CD4-positive, alpha-beta T cell (primary cell): ENCODE measurements at regions of chrX and their contacts with region 1.

Region 1: DNA sequence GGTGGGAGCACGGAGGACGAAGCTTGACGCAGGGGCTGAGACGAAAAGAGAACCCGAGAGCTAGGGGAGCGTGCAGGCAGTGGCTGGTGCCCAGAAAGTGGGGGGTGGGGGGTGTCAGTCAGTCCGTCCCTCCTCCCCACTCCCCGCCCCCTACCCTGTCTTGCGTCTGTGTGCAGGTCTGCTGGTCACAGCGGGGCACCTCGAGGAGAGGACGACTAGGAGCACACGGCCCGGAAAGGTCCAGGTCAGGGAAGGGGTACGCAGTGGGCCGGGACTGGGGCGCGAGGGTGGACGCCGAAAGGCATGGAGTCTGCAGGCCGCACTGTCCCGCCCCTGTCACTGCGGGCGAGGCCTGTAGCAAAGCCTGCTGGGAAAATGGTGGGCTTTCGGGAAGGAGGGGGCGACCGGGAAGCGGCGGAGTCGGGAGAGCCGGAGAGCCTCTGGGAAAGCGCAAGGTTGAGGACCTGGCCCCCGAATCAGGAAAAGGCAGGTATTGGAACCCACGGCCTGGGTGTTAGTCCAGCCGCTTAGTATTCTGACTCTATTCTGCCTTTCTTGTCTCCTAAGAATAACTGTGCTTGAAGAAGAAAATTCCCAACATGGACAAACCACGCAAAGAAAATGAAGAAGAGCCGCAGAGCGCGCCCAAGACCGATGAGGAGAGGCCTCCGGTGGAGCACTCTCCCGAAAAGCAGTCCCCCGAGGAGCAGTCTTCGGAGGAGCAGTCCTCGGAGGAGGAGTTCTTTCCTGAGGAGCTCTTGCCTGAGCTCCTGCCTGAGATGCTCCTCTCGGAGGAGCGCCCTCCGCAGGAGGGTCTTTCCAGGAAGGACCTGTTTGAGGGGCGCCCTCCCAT is 769 bp downstream of the TCEAL1 start:
- DNase-seq: peak in 5 of 14 experiments; percentile 9 to 45 (median 26)
- ATAC-seq: peak; percentile 59
- H3K4me3 ChIP-seq: peak overlapping the region; percentile 84
- H3K4me3 Mint-ChIP-seq: peak overlapping the region; percentile 94
- H3K27ac ChIP-seq: no peak overlapping the region
- H3K27ac Mint-ChIP-seq: peak overlapping the region; percentile 65
- H3K4me1 ChIP-seq: peaks cover 9% of the 10 kb centered on the region
- H3K4me1 Mint-ChIP-seq: peaks cover 27% of the 10 kb centered on the region
- H3K27me3 ChIP-seq: no peaks in the 10 kb centered on the region
- H3K27me3 Mint-ChIP-seq: no peaks in the 10 kb centered on the region
- CTCF ChIP-seq: no peak

Region 2: DNA sequence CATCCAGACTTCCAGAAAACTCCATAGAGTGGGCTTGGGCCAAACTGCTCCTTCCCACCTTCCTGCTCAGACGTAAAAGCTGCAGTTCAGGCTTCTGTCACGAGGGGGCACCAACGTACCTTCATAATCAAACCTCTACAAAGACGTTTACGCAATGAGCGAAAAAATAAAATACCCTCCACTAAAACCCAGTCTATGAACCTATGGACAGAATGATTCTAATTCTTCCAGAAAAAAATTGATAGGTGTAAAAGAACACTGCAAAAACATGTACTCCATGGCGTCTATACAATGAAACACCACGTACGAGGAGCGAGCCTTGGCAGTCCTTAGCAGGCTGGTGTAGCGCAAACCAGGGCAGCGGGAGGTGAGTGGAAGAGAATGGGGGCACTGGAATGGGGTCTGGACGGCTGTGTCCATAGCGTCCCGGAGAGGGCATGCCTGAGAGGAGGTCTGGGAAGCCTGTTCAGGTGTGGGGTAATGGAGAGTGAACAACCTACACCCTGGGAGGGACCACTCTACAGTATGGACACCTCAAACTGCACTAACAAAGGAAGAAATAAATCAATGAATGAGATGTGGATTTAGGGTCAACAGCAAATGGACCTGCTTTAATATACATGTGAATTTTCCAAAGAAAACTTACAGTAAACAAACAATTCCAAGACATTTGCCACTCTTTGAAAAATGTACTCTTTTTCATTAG is 95.9 kb before region 1 on chrX:
- CTCF ChIA-PET with region 1: no interaction called
- POLR2A ChIA-PET with region 1: no interaction called
- intact Hi-C with region 1: no loop called
- DNase-seq: peak; percentile 38 to 81 (median 61)
- ATAC-seq: peak; percentile 60
- H3K4me3 ChIP-seq: peak overlapping the region; percentile 20
- H3K4me3 Mint-ChIP-seq: peak overlapping the region; percentile 58
- H3K27ac ChIP-seq: no peak overlapping the region
- H3K27ac Mint-ChIP-seq: no peak overlapping the region
- H3K4me1 ChIP-seq: peaks cover 4% of the 10 kb centered on the region
- H3K4me1 Mint-ChIP-seq: peaks cover 4% of the 10 kb centered on the region
- H3K27me3 ChIP-seq: no peaks in the 10 kb centered on the region
- H3K27me3 Mint-ChIP-seq: no peaks in the 10 kb centered on the region
- CTCF ChIP-seq: peak; percentile 75

Region 3: DNA sequence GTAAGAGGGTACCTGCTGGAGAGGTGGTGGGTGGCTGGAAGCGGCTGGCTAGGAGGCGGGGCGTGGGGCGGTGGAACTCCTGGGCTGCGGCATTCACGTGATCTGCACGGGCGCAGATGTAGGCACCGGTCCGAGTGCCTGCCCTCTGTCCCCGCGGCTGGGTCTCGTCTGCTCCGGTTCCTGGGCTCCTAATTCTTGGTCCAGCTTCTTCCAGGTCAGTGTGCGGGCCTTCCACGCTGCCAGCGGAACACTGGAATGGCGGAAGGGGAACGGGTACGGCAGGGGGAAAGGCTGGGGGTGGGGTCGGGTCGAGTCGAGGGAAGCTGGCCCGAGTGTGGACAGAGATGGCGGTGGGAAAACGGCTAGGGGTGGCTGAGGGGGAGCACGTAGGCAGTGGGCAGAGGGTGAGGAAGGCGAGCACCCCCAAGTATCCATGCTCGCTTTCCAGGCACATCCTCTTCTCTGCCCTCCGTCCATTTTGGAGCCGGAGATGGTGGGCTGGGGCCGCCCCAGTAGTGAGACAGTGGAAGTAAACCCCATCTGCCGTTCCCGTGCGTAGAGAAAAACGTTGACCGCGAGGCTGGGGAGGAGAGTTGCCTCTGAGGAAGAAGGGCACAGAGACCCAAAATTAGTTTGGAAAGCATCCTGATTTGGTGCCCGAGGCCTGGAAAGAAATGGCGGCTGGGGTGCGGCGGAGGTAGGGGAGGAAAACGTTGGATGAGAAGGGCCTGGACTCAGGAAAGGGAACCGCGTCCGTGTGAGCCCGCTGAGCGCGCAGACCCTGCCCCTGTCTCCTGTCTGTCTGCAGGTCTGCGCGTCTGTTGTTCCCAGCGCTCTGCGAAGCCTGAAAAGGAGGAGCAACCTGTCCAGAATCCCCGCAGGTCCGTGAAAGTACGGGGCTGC is 43.9 kb before region 1 on chrX and contains the start of gene TCEAL4:
- CTCF ChIA-PET with region 1: no interaction called
- POLR2A ChIA-PET with region 1: no interaction called
- intact Hi-C with region 1: loop called in 1 of 2 experiments (anchors 5 kb)
- DNase-seq: peak in 8 of 14 experiments; percentile 3 to 58 (median 32)
- ATAC-seq: peak; percentile 77
- H3K4me3 ChIP-seq: peak within 1 kb of the TSS; percentile 70
- H3K4me3 Mint-ChIP-seq: peak within 1 kb of the TSS; percentile 90
- H3K27ac ChIP-seq: no peak within 1 kb of the TSS
- H3K27ac Mint-ChIP-seq: peak within 1 kb of the TSS; percentile 49
- H3K4me1 ChIP-seq: peaks cover 9% of the 10 kb centered on the region
- H3K4me1 Mint-ChIP-seq: peaks cover 16% of the 10 kb centered on the region
- H3K27me3 ChIP-seq: no peaks in the 10 kb centered on the region
- H3K27me3 Mint-ChIP-seq: peaks cover 9% of the 10 kb centered on the region
- CTCF ChIP-seq: no peak
- total RNA-seq, gene TCEAL4: 10.5 to 11.1 TPM

Region 4: DNA sequence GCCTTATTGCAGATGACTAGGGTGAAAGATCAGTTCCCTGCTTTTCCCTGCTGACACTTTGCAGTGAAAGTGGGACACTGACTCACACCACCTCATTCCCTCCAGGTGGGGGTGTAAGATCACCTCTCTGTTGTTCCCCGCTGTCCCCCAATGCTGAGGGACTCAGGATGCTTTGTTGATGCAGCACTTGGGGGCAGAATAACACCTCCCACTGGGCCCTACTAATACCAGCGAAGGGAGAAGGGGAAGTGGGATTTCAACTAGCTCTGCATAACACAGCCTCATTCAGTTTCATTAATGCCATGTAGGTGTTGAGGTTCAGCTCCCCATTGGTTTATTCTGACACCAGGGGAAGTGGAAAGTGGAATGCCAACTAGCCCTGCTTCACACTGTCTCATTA is 892.8 kb after region 1 on chrX:
- CTCF ChIA-PET with region 1: no interaction called
- POLR2A ChIA-PET with region 1: no interaction called
- intact Hi-C with region 1: no loop called
- DNase-seq: no peak
- ATAC-seq: no peak
- H3K4me3 ChIP-seq: no peak overlapping the region
- H3K4me3 Mint-ChIP-seq: no peak overlapping the region
- H3K27ac ChIP-seq: no peak overlapping the region
- H3K27ac Mint-ChIP-seq: no peak overlapping the region
- H3K4me1 ChIP-seq: no peaks in the 10 kb centered on the region
- H3K4me1 Mint-ChIP-seq: no peaks in the 10 kb centered on the region
- H3K27me3 ChIP-seq: peaks cover 0 to 3% of the 10 kb centered on the region in 2 experiments
- H3K27me3 Mint-ChIP-seq: peaks cover 5% of the 10 kb centered on the region
- CTCF ChIP-seq: no peak